HepG2 (cell line): ENCODE measurements at regions of chr19 and their contacts with region 1.

Region 1: DNA sequence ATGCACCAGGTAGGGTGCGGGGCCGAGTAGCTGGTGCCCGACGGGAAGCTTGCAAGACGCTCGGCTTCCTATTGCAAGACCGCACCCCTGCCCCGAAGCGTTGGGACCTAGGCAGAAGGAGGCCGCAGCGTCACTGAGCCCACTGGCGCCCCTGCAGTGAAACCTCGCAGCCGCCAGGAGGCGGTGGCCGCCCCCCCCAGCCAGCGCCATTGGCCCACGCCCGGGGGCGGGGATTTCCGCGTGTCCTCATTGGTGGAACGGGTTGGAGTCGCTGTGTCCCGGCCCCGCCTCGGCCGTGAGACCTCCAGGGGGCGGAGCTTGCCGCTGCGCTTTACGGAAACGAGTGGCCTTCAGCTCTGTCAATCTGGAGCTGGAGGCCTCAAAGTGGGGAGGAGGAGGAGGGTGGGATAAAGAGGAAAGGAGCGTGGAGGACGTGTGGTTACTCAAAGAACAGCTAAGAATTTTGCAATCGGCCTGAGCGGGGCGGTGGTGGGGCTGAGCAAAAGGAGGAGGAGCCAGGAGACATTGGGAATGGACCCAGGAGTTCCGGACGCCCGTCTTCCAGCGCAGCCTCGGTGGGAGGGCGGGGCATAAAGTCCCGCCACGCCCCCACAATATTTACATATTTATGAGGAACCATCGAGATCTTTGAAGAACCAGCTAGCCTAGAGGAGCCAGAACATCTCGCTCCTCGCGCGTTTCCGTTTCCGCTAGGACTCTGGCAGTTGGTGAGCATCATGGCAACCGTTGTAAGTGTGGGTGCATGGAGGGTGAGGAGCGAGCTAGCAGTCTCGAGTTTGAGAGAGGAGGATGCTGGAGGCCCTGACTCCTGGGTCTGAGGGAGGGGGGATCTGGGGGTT is at the starts of genes GYS1 and RUVBL2:
- DNase-seq: peak; percentile 99
- ATAC-seq: peak; percentile 90
- H3K4me3 ChIP-seq: peak within 1 kb of the TSS; percentile 90 to 98 (median 98)
- H3K27ac ChIP-seq: peak within 1 kb of the TSS; percentile 80
- H3K4me1 ChIP-seq: peaks cover 41% of the 10 kb centered on the region
- H3K27me3 ChIP-seq: no peaks in the 10 kb centered on the region; a peak in 1 of 5 replicates
- CTCF ChIP-seq: peak; percentile 93
- EP300 ChIP-seq: no peak
- POLR2A ChIP-seq: peak; percentile 91 to 98
- RAD21 ChIP-seq: peak; percentile 50; the same call in 1 of the 2 replicates
- total RNA-seq, gene GYS1: 16.4 and 18.4 TPM in 2 replicates
- total RNA-seq, gene RUVBL2: 108 and 122 TPM in 2 replicates

Region 2: DNA sequence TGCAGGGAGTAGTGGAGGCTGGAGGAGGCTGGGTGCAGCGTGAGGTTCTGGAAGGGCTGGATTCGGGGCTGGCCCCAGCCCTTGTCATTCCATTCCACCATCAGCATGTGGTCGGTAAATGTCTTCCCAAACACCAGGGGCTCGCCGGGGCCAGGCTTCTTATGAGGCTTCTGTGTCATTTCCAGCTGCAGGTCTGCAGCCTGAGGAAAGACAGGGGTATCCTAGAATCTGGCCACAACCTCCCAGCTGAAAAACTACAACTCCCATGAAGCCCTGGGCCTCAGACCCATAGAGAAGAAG is 186.9 kb before region 1 on chr19:
- CTCF ChIA-PET with region 1: no interaction called
- POLR2A ChIA-PET with region 1: interaction called, 11 read pairs
- in situ Hi-C with region 1: no loop called
- intact Hi-C with region 1: no loop called
- DNase-seq: no peak
- ATAC-seq: no peak
- H3K4me3 ChIP-seq: peak overlapping the region in 2 of 3 experiments; percentile 73 to 78; a peak in 3 of 6 replicates
- H3K27ac ChIP-seq: peak overlapping the region; percentile 82
- H3K4me1 ChIP-seq: peaks cover 38% of the 10 kb centered on the region
- H3K27me3 ChIP-seq: no peaks in the 10 kb centered on the region
- CTCF ChIP-seq: 0 out of 2 replicates have a peak, but pooled peaks have one; percentile 2
- EP300 ChIP-seq: no peak
- POLR2A ChIP-seq: no peak
- RAD21 ChIP-seq: no peak

Region 3: GRCh38 chr19:48954595-48955310 is 38.7 kb before region 1 on chr19 and contains the start of gene BAX:
- CTCF ChIA-PET with region 1: no interaction called
- POLR2A ChIA-PET with region 1: interaction called, 12 read pairs
- in situ Hi-C with region 1: no loop called
- intact Hi-C with region 1: no loop called
- DNase-seq: peak; percentile 96
- ATAC-seq: peak; percentile 81
- H3K4me3 ChIP-seq: peak within 1 kb of the TSS; percentile 76 to 84 (median 81)
- H3K27ac ChIP-seq: peak within 1 kb of the TSS; percentile 82
- H3K4me1 ChIP-seq: peaks cover 85% of the 10 kb centered on the region
- H3K27me3 ChIP-seq: no peaks in the 10 kb centered on the region
- CTCF ChIP-seq: peak; percentile 47
- EP300 ChIP-seq: peak in 1 of 2 experiments; percentile 25; a peak in 1 of 4 replicates
- POLR2A ChIP-seq: peak in 1 of 2 experiments; percentile 69; a peak in 3 of 4 replicates
- RAD21 ChIP-seq: peak; percentile 71
- total RNA-seq, gene BAX: 167 and 176 TPM in 2 replicates

Region 4: GRCh38 chr19:48975947-48976847 is 17.2 kb before region 1 on chr19:
- CTCF ChIA-PET with region 1: no interaction called
- POLR2A ChIA-PET with region 1: interaction called, 18 read pairs
- in situ Hi-C with region 1: no loop called
- intact Hi-C with region 1: no loop called
- DNase-seq: no peak
- ATAC-seq: peak; percentile 59
- H3K4me3 ChIP-seq: no peak overlapping the region
- H3K27ac ChIP-seq: no peak overlapping the region
- H3K4me1 ChIP-seq: no peaks in the 10 kb centered on the region
- H3K27me3 ChIP-seq: no peaks in the 10 kb centered on the region
- CTCF ChIP-seq: no peak
- EP300 ChIP-seq: no peak
- POLR2A ChIP-seq: no peak
- RAD21 ChIP-seq: no peak

Region 5: GRCh38 chr19:49148784-49149651 is 155.6 kb after region 1 on chr19:
- CTCF ChIA-PET with region 1: no interaction called
- POLR2A ChIA-PET with region 1: interaction called, 10 read pairs
- in situ Hi-C with region 1: no loop called
- intact Hi-C with region 1: no loop called
- DNase-seq: peak; percentile 86
- ATAC-seq: peak; percentile 66
- H3K4me3 ChIP-seq: peak overlapping the region; percentile 53 to 86 (median 63)
- H3K27ac ChIP-seq: peak overlapping the region; percentile 77
- H3K4me1 ChIP-seq: peaks cover 54% of the 10 kb centered on the region
- H3K27me3 ChIP-seq: no peaks in the 10 kb centered on the region; a peak in 2 of 5 replicates
- CTCF ChIP-seq: no peak
- EP300 ChIP-seq: no peak
- POLR2A ChIP-seq: peak in 1 of 2 experiments; percentile 10; a peak in 2 of 4 replicates
- RAD21 ChIP-seq: no peak